IMR-90 (cell line): ENCODE measurements at regions of chr15 and their contacts with region 1.

Region 1: GRCh38 chr15:80173022-80173759 is 20.4 kb downstream of the FAH start:
- DNase-seq: peak; percentile 52
- ATAC-seq: peak; percentile 59
- H3K4me3 ChIP-seq: no peak overlapping the region
- H3K27ac ChIP-seq: no peak overlapping the region
- H3K4me1 ChIP-seq: peaks cover 12% of the 10 kb centered on the region
- H3K27me3 ChIP-seq: no peaks in the 10 kb centered on the region
- CTCF ChIP-seq: peak; percentile 75
- POLR2A ChIP-seq: no peak
- RAD21 ChIP-seq: peak; percentile 83

Region 2: DNA sequence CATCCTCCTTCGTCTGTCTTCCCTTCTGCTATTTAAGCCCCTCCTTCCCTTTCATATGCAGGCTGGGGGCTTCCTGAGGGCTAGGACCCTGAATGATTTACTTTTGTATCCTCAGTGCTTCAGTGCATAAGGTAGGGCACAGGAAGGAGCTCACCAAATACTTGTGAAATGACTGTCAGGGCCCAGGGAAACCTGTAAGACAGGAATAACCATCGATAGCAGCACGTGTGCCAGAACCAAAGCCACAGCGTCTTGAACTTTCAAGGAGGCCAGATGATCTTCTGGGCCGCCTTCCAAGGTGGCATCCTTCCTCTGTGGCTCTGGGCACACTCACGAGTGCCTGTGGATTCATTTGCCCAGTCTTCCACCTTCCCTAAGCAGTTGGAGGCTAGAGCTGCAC is 858.4 kb before region 1 on chr15:
- CTCF ChIA-PET with region 1: no interaction called
- POLR2A ChIA-PET with region 1: no interaction called
- dilution Hi-C with region 1: no loop called
- in situ Hi-C with region 1: no loop called
- intact Hi-C with region 1: no loop called
- DNase-seq: no peak
- ATAC-seq: no peak
- H3K4me3 ChIP-seq: no peak overlapping the region
- H3K27ac ChIP-seq: no peak overlapping the region
- H3K4me1 ChIP-seq: peaks cover 6% of the 10 kb centered on the region; the same call in 1 of the 2 replicates
- H3K27me3 ChIP-seq: no peaks in the 10 kb centered on the region
- CTCF ChIP-seq: no peak
- POLR2A ChIP-seq: no peak
- RAD21 ChIP-seq: no peak

Region 3: DNA sequence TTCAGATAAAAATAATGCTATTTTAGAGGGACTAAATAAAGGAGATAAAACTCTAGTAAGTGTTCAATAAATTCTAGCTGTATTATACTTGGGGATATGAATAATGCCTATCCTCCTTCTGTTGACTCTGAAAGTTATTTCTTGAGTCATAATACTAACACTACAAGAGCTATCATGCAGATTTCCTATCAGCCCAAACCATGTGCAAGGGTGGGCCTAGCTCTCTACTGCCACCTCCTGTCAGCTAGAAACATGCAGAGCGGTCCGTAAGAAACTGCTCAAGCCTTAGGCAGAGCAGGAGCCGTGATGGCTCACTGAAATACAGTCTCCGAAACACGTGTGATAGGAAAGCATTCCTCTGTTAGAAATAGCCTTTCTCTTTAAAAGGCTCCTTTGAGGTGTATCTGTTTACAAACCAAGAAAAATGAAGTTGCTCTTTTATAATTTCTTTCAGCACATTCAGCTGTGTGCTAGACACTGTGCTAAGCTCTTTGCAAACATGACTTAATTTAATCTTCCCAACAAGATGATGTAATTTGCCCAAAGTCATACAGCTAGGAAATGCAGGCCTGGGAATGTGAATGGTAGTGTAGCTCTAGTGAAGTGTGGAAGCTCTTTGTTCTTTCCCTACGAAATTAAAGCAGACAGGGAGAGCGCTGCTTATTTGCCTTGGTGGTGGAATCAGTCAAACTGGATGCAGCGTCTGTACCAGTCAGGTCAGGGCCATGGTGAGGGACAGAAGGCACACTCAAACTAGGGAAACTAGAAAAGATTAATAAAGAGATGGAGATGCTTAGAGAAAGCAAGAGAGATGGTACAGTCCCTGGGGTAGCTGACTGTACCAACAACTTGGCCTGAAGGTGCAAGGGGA is 319.5 kb before region 1 on chr15:
- CTCF ChIA-PET with region 1: no interaction called
- POLR2A ChIA-PET with region 1: no interaction called
- dilution Hi-C with region 1: no loop called
- in situ Hi-C with region 1: no loop called
- intact Hi-C with region 1: loop called (anchors 2 kb)
- DNase-seq: peak; percentile 93
- ATAC-seq: peak; percentile 100
- H3K4me3 ChIP-seq: no peak overlapping the region
- H3K27ac ChIP-seq: no peak overlapping the region
- H3K4me1 ChIP-seq: no peaks in the 10 kb centered on the region
- H3K27me3 ChIP-seq: no peaks in the 10 kb centered on the region
- CTCF ChIP-seq: peak; percentile 95
- POLR2A ChIP-seq: no peak
- RAD21 ChIP-seq: peak; percentile 90

Region 4: GRCh38 chr15:79901958-79902357 is 271.2 kb before region 1 on chr15:
- CTCF ChIA-PET with region 1: interaction called, 3 read pairs
- POLR2A ChIA-PET with region 1: no interaction called
- dilution Hi-C with region 1: no loop called
- in situ Hi-C with region 1: loop called (anchors 10 kb)
- intact Hi-C with region 1: loop called (anchors 5 kb)
- DNase-seq: no peak
- ATAC-seq: no peak
- H3K4me3 ChIP-seq: no peak overlapping the region
- H3K27ac ChIP-seq: no peak overlapping the region
- H3K4me1 ChIP-seq: peaks cover 10% of the 10 kb centered on the region
- H3K27me3 ChIP-seq: no peaks in the 10 kb centered on the region
- CTCF ChIP-seq: no peak
- POLR2A ChIP-seq: no peak
- RAD21 ChIP-seq: no peak

Region 5: GRCh38 chr15:80011596-80011995 is 161.6 kb before region 1 on chr15:
- CTCF ChIA-PET with region 1: no interaction called
- POLR2A ChIA-PET with region 1: no interaction called
- dilution Hi-C with region 1: no loop called
- in situ Hi-C with region 1: no loop called
- intact Hi-C with region 1: loop called (anchors 1 kb)
- DNase-seq: no peak
- ATAC-seq: no peak
- H3K4me3 ChIP-seq: no peak overlapping the region
- H3K27ac ChIP-seq: no peak overlapping the region
- H3K4me1 ChIP-seq: peaks cover 5% of the 10 kb centered on the region
- H3K27me3 ChIP-seq: no peaks in the 10 kb centered on the region
- CTCF ChIP-seq: no peak
- POLR2A ChIP-seq: no peak
- RAD21 ChIP-seq: no peak

Region 6: DNA sequence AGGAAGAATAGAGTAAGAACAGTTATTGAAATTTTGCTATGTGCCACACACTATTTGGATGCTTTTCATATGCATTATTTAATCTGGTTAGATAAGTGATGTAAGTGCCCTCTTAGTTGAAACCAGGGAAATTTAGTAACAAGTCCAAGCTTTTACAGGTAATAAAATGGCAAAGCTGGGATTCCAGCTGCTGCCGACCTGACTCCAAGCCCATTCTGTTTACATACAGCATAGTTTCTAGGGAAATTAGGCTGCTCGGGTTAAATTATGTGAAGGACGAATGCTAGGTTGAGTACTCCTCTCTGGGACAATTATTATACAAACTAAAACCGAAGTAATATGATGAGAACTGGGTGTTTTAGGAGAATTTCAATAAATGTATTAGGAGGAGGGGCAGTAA is 59.1 kb before region 1 on chr15:
- CTCF ChIA-PET with region 1: no interaction called
- POLR2A ChIA-PET with region 1: no interaction called
- dilution Hi-C with region 1: no loop called
- in situ Hi-C with region 1: loop called (anchors 5 kb)
- intact Hi-C with region 1: no loop called
- DNase-seq: no peak
- ATAC-seq: no peak
- H3K4me3 ChIP-seq: no peak overlapping the region
- H3K27ac ChIP-seq: no peak overlapping the region
- H3K4me1 ChIP-seq: peaks cover 4% of the 10 kb centered on the region; the same call in 1 of the 2 replicates
- H3K27me3 ChIP-seq: no peaks in the 10 kb centered on the region
- CTCF ChIP-seq: no peak
- POLR2A ChIP-seq: no peak
- RAD21 ChIP-seq: no peak